Testis (tissue), 5 donors: ENCODE measurements at regions of chr19 and their contacts with region 1.

Region 1: GRCh38 chr19:7197760-7198696 is 96.2 kb downstream of the INSR start:
- DNase-seq: peak; percentile 92
- H3K4me3 ChIP-seq: peak overlapping the region; percentile 60 to 66
- H3K27ac ChIP-seq: peak overlapping the region; percentile 83 to 90
- H3K4me1 ChIP-seq: peaks cover 22% of the 10 kb centered on the region
- H3K27me3 ChIP-seq: no peaks in the 10 kb centered on the region
- CTCF ChIP-seq: peak in 2 of 3 experiments; percentile 1 to 15
- POLR2A ChIP-seq: no peak

Region 2: GRCh38 chr19:6979399-6979798 is 218.6 kb before region 1 on chr19:
- intact Hi-C with region 1: no loop called
- DNase-seq: no peak
- H3K4me3 ChIP-seq: no peak overlapping the region
- H3K27ac ChIP-seq: no peak overlapping the region
- H3K4me1 ChIP-seq: no peaks in the 10 kb centered on the region
- H3K27me3 ChIP-seq: no peaks in the 10 kb centered on the region
- CTCF ChIP-seq: no peak
- POLR2A ChIP-seq: no peak

Region 3: GRCh38 chr19:7293795-7294570 is 96.0 kb after region 1 on chr19 and contains the start of gene INSR:
- intact Hi-C with region 1: loop called (anchors 10 kb)
- DNase-seq: peak; percentile 87
- H3K4me3 ChIP-seq: peak within 1 kb of the TSS; percentile 93 to 96
- H3K27ac ChIP-seq: peak within 1 kb of the TSS; percentile 88 to 93
- H3K4me1 ChIP-seq: peaks cover 16% of the 10 kb centered on the region
- H3K27me3 ChIP-seq: no peaks in the 10 kb centered on the region
- CTCF ChIP-seq: no peak
- POLR2A ChIP-seq: no peak
- total RNA-seq, gene INSR: 85.1 to 96.5 TPM